Activated CD4-positive, alpha-beta memory T cell treated with anti-CD3 and anti-CD28 coated beads for 36 hours (primary cell): ENCODE measurements at regions of chr16 and their contacts with region 1.

Region 1: GRCh38 chr16:69166221-69166833 is 20.6 kb upstream of the SNTB2 start:
- DNase-seq: peak; percentile 91
- H3K4me3 Mint-ChIP-seq: peak overlapping the region; percentile 34
- H3K27ac Mint-ChIP-seq: peak overlapping the region; percentile 92
- H3K4me1 Mint-ChIP-seq: peaks cover 46% of the 10 kb centered on the region
- H3K27me3 Mint-ChIP-seq: no peaks in the 10 kb centered on the region

Region 2: DNA sequence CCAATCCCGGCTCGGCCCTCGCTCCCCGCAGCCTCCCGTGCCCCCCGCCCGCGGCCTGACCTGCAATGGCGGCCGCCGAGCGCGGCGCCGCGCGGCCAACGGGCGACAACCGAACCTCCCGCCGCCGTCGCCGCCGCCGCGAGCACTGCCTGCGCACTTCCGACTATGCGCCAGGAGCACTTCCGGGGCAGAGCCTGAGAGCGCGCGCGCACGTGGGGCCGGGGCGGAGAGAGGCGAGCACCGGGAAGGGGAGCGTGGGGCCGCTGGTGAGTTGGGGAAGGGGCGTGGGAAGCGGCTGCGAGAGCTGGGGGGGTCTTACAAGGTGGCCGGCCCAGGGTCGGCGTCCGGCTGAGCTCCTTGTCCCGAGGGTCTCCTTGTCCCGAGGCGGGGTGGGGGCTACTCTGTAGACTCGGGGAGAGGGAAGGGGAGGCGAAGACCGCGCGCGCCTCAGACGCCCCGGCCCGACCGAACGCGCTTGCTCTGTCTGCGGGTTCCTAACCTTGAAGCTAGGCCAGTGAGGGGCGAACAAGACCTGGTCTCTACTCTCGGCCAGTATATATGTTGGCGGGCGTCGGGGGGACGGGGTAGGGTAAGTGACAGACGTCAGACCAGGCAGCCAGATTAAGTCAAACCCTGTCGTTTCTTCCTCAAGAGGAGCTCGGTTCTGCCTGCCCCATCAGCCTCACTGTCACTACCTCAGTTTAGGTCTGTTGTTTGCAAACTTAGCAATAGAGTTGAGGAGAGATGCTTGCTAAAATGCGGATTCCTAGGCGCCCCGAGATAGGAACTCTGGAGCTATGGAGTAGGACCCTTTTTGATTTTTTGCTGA is 33.7 kb before region 1 on chr16 and contains the starts of genes CHTF8 and UTP4:
- CTCF ChIA-PET with region 1: interaction called, 3 read pairs
- POLR2A ChIA-PET with region 1: interaction called, 31 read pairs
- intact Hi-C with region 1: no loop called
- DNase-seq: peak; percentile 91
- H3K4me3 Mint-ChIP-seq: peak within 1 kb of the TSS; percentile 97
- H3K27ac Mint-ChIP-seq: peak within 1 kb of the TSS; percentile 91
- H3K4me1 Mint-ChIP-seq: peaks cover 64% of the 10 kb centered on the region
- H3K27me3 Mint-ChIP-seq: no peaks in the 10 kb centered on the region
- total RNA-seq, gene CHTF8: 120 to 132 TPM
- total RNA-seq, gene UTP4: 104 to 106 TPM

Region 3: GRCh38 chr16:69150146-69150865 is 16.0 kb before region 1 on chr16:
- CTCF ChIA-PET with region 1: interaction called, 29 read pairs
- POLR2A ChIA-PET with region 1: no interaction called
- intact Hi-C with region 1: no loop called
- DNase-seq: peak; percentile 48
- H3K4me3 Mint-ChIP-seq: no peak overlapping the region
- H3K27ac Mint-ChIP-seq: no peak overlapping the region
- H3K4me1 Mint-ChIP-seq: no peaks in the 10 kb centered on the region
- H3K27me3 Mint-ChIP-seq: no peaks in the 10 kb centered on the region

Region 4: GRCh38 chr16:69186642-69187445 is 20.5 kb after region 1 on chr16 and contains the start of gene SNTB2:
- CTCF ChIA-PET with region 1: interaction called, 13 read pairs
- POLR2A ChIA-PET with region 1: interaction called, 44 read pairs
- intact Hi-C with region 1: loop called (anchors 1 kb)
- DNase-seq: peak; percentile 89
- H3K4me3 Mint-ChIP-seq: peak within 1 kb of the TSS; percentile 97
- H3K27ac Mint-ChIP-seq: peak within 1 kb of the TSS; percentile 98
- H3K4me1 Mint-ChIP-seq: peaks cover 55% of the 10 kb centered on the region
- H3K27me3 Mint-ChIP-seq: no peaks in the 10 kb centered on the region
- total RNA-seq, gene SNTB2: 19.8 to 20.1 TPM

Region 5: GRCh38 chr16:69217433-69217832 is 51.1 kb after region 1 on chr16:
- CTCF ChIA-PET with region 1: no interaction called
- POLR2A ChIA-PET with region 1: no interaction called
- intact Hi-C with region 1: loop called (anchors 1 kb)
- DNase-seq: no peak
- H3K4me3 Mint-ChIP-seq: no peak overlapping the region
- H3K27ac Mint-ChIP-seq: no peak overlapping the region
- H3K4me1 Mint-ChIP-seq: peaks cover 10% of the 10 kb centered on the region
- H3K27me3 Mint-ChIP-seq: no peaks in the 10 kb centered on the region

Region 6: GRCh38 chr16:69286941-69287713 is 120.8 kb after region 1 on chr16:
- CTCF ChIA-PET with region 1: interaction called, 17 read pairs
- POLR2A ChIA-PET with region 1: no interaction called
- intact Hi-C with region 1: loop called (anchors 5 kb)
- DNase-seq: no peak
- H3K4me3 Mint-ChIP-seq: no peak overlapping the region
- H3K27ac Mint-ChIP-seq: peak overlapping the region; percentile 29
- H3K4me1 Mint-ChIP-seq: peaks cover 3% of the 10 kb centered on the region
- H3K27me3 Mint-ChIP-seq: no peaks in the 10 kb centered on the region

Region 7: DNA sequence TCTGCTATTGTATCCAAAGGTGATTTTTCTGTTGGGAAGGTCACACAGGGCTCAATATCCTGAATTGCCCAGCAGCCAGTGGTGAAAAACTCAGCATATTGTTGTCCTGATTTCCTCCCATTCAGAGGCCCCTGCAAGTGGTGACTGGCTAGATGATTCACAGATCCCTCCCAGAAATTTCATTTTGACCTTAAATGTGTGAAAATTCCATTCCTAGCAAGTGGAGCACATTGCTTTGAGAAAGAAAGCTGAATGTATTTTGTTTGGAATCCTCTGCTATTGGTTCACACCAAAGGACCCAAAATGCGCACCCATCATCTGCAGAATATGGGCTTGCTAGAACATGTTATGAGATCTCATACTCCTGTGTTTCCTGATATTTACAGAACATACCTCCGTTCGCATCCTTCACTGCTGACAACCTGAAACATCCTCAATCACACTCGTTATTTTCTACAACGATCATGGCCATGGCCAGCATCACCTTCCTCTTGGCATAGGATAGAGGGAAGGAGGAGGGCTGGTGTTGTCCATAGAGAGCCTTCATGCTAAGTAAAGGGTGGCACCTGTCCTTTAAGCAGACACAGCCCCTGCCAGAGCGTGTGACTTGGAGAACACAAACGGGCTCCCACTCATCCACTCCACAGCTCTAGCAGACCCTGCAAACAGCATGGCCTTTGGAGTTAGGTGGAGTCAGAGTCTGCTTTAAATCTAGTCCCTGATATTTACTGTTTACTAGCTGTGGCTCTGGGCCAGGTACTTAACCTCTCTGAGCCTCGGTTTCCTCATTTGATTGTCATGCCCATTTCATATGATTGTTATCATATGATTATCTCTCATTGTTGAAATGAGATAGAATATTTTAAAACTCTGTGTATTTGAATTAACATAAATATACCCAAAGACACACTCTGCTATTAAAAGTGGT is 369.1 kb after region 1 on chr16:
- CTCF ChIA-PET with region 1: no interaction called
- POLR2A ChIA-PET with region 1: no interaction called
- intact Hi-C with region 1: loop called (anchors 2 kb)
- DNase-seq: no peak
- H3K4me3 Mint-ChIP-seq: no peak overlapping the region
- H3K27ac Mint-ChIP-seq: no peak overlapping the region
- H3K4me1 Mint-ChIP-seq: peaks cover 21% of the 10 kb centered on the region
- H3K27me3 Mint-ChIP-seq: no peaks in the 10 kb centered on the region